ENCODE measurements at regions of chr1 and their contacts with region 1.

Region 1: DNA sequence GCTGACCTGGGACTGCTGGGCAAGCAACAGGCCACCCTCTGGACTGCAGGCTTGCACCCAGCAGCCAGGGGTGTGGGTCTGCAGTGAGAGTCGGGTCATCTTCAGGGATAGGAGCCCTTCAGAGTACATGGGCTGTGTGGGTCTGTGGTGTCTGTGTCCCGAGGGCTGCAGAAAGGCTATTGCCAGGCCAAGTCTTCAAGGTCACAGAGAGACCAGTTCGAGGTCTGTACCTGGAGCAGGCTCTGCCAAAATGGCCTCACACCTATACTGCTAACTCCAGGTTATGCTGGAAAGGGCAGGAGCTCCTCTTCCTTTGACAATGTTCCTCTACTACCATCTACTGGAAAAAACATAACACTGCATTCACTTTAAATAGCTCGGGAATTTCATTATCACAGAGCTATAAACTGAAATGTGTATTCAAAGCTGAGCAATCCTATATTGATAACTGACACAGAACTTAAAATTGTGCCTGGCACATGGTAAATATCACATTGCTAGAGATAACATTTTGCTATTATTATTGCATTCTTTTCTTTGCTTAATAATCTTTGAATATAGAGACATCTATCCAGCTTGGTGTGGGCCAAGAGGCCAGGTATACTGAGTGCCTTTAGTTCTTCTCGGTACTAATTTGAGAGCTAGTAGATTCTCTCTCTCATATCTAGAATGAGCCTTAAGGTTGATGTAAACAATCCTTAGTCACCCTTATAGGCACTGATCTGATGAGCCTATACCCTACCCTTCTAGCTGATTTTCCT is 6.9 kb upstream of the DNAH14 start:
- DNase-seq: peak; percentile 11
- ATAC-seq: peak; percentile 84
- H3K4me3 ChIP-seq: no peak overlapping the region
- H3K27ac ChIP-seq: no peak overlapping the region
- H3K4me1 ChIP-seq: no peaks in the 10 kb centered on the region
- H3K27me3 ChIP-seq: no peaks in the 10 kb centered on the region
- CTCF ChIP-seq: peak; percentile 54 to 78 (median 61); a peak in 5 of 6 replicates
- EP300 ChIP-seq: no peak
- POLR2A ChIP-seq: no peak
- RAD21 ChIP-seq: peak; percentile 78

Region 2: GRCh38 chr1:224329842-224330753 is 592.5 kb before region 1 on chr1 and contains the start of gene NVL:
- CTCF ChIA-PET with region 1: interaction called, 10 read pairs
- POLR2A ChIA-PET with region 1: no interaction called
- RAD21 ChIA-PET with region 1: interaction called, 6 read pairs
- SMC1A ChIA-PET with region 1: no interaction called
- in situ Hi-C with region 1: no loop called
- intact Hi-C with region 1: no loop called
- DNase-seq: peak; percentile 48
- ATAC-seq: peak; percentile 85
- H3K4me3 ChIP-seq: peak within 1 kb of the TSS; percentile 97
- H3K27ac ChIP-seq: peak within 1 kb of the TSS; percentile 99
- H3K4me1 ChIP-seq: peaks cover 7% of the 10 kb centered on the region
- H3K27me3 ChIP-seq: no peaks in the 10 kb centered on the region
- CTCF ChIP-seq: no peak
- EP300 ChIP-seq: no peak
- POLR2A ChIP-seq: peak; percentile 85
- RAD21 ChIP-seq: no peak
- polyA plus RNA-seq, gene NVL: 20.3 to 30.4 TPM

Region 3: GRCh38 chr1:224513787-224514209 is 408.8 kb before region 1 on chr1:
- CTCF ChIA-PET with region 1: interaction called, 182 read pairs
- POLR2A ChIA-PET with region 1: interaction called, 3 read pairs
- RAD21 ChIA-PET with region 1: interaction called, 81 read pairs
- SMC1A ChIA-PET with region 1: interaction called, 105 read pairs
- in situ Hi-C with region 1: loop called (anchors 5 kb)
- intact Hi-C with region 1: loop called (anchors 1 kb)
- DNase-seq: no peak
- ATAC-seq: peak; percentile 100
- H3K4me3 ChIP-seq: no peak overlapping the region
- H3K27ac ChIP-seq: no peak overlapping the region
- H3K4me1 ChIP-seq: 0 out of 2 replicates have a peak, but pooled peaks cover 5% of the 10 kb centered on the region
- H3K27me3 ChIP-seq: no peaks in the 10 kb centered on the region
- CTCF ChIP-seq: peak; percentile 86 to 98 (median 92); a peak in 5 of 6 replicates
- EP300 ChIP-seq: no peak
- POLR2A ChIP-seq: no peak
- RAD21 ChIP-seq: peak; percentile 92

Region 4: DNA sequence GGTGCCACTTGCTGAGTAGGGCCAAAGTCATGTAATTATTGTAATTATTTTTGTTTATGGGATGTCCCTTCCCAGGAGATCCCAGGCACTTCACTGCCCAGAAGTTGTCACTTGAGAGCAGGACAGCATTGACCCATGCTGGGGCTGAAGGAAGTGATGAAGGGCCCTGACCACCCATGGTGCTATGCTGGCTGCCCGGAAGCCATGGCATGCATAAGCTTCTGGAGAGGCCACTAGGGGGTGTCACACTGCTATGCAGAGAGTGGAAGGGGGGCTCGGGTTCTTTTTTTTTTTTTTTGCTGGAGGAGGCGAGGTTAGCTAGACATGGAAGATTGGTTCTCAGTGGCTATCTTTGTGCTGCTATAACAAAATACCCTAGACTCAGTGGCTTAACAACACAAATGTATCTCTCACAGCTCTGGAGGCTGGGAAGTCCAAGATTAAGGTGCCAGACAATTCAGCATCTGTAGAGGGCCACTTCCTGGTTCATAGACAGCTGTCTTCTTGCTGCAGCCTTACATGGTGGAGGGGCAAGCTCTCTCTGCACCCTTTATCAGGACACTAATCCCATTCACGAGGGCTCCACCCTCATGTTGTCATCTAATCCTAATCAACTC is 221.6 kb before region 1 on chr1:
- CTCF ChIA-PET with region 1: interaction called, 13 read pairs
- POLR2A ChIA-PET with region 1: no interaction called
- RAD21 ChIA-PET with region 1: interaction called, 10 read pairs
- SMC1A ChIA-PET with region 1: interaction called, 8 read pairs
- in situ Hi-C with region 1: no loop called
- intact Hi-C with region 1: no loop called
- DNase-seq: peak; percentile 9
- ATAC-seq: peak; percentile 89
- H3K4me3 ChIP-seq: no peak overlapping the region
- H3K27ac ChIP-seq: no peak overlapping the region
- H3K4me1 ChIP-seq: no peaks in the 10 kb centered on the region
- H3K27me3 ChIP-seq: no peaks in the 10 kb centered on the region
- CTCF ChIP-seq: peak; percentile 36 to 65 (median 54)
- EP300 ChIP-seq: no peak
- POLR2A ChIP-seq: no peak
- RAD21 ChIP-seq: peak; percentile 92

Region 5: GRCh38 chr1:224873434-224874369 is 48.9 kb before region 1 on chr1:
- CTCF ChIA-PET with region 1: interaction called, 7 read pairs
- POLR2A ChIA-PET with region 1: interaction called, 3 read pairs
- RAD21 ChIA-PET with region 1: interaction called, 20 read pairs
- SMC1A ChIA-PET with region 1: interaction called, 12 read pairs
- in situ Hi-C with region 1: no loop called
- intact Hi-C with region 1: no loop called
- DNase-seq: no peak
- ATAC-seq: no peak
- H3K4me3 ChIP-seq: no peak overlapping the region
- H3K27ac ChIP-seq: no peak overlapping the region
- H3K4me1 ChIP-seq: no peaks in the 10 kb centered on the region
- H3K27me3 ChIP-seq: no peaks in the 10 kb centered on the region; a peak in 1 of 4 replicates
- CTCF ChIP-seq: no peak
- EP300 ChIP-seq: no peak
- POLR2A ChIP-seq: no peak
- RAD21 ChIP-seq: no peak

Region 6: DNA sequence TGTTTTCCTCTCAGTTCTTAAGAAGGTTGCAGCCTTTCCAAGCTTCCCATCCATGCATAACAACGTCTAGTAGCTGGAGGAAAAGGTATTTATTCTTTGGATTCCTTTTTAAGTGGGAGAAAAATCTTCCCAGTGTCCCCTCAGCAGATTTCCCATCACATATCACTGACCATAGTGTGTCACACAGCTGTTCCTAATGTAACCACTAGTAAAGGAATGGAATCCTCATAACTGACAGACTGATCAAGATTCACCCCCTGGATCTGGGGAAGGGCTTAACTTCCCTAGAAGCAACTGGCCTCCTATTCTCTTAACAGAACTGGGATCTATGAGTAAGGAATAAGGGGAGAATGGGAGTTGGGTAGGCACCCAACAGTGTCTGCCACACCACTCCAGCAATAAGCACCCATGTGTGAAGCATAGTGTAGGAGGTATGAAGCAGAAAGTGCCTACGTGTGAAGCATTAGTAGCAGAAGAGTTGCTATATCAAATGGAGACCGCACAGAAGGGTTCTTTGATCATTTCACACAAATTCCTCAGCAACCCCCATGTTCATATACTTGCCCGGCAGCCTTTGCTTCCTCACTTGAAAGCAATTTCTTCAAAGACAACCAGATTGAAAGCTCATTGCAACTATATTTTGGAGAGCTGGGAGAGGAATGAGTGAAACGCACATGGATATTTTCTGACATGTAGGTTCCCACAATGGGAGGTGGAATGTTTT is 21.3 kb before region 1 on chr1:
- CTCF ChIA-PET with region 1: interaction called, 27 read pairs
- POLR2A ChIA-PET with region 1: interaction called, 3 read pairs
- RAD21 ChIA-PET with region 1: interaction called, 10 read pairs
- SMC1A ChIA-PET with region 1: interaction called, 12 read pairs
- in situ Hi-C with region 1: no loop called
- intact Hi-C with region 1: no loop called
- DNase-seq: no peak
- ATAC-seq: peak; percentile 33; the same call in 1 of the 3 replicates
- H3K4me3 ChIP-seq: no peak overlapping the region
- H3K27ac ChIP-seq: no peak overlapping the region
- H3K4me1 ChIP-seq: no peaks in the 10 kb centered on the region
- H3K27me3 ChIP-seq: no peaks in the 10 kb centered on the region; a peak in 1 of 4 replicates
- CTCF ChIP-seq: no peak
- EP300 ChIP-seq: no peak
- POLR2A ChIP-seq: no peak
- RAD21 ChIP-seq: no peak

Measured in GM12878 (cell line).